Heart right ventricle (tissue), 16 donors: ENCODE measurements at regions of chr15 and their contacts with region 1.

Region 1: GRCh38 chr15:35674873-35675781 is 129.2 kb upstream of the DPH6 start:
- DNase-seq: peak in 1 of 2 donors; percentile 29
- ATAC-seq: peak in 4 of 8 donors; percentile 18 to 43 (median 30)
- H3K4me3 ChIP-seq: no peak overlapping the region
- H3K27ac ChIP-seq: peak overlapping the region; percentile 8 to 82 (median 49)
- H3K4me1 ChIP-seq: peaks cover 0 to 59% (median 41%) of the 10 kb centered on the region in 9 donors
- H3K27me3 ChIP-seq: no peaks in the 10 kb centered on the region
- CTCF ChIP-seq: no peak

Region 2: GRCh38 chr15:35535365-35535916 is 139.7 kb before region 1 on chr15:
- intact Hi-C with region 1: loop called in 2 of 10 experiments (anchors 5 to 10 kb)
- DNase-seq: no peak
- ATAC-seq: no peak
- H3K4me3 ChIP-seq: no peak overlapping the region
- H3K27ac ChIP-seq: no peak overlapping the region
- H3K4me1 ChIP-seq: no peaks in the 10 kb centered on the region
- H3K27me3 ChIP-seq: no peaks in the 10 kb centered on the region
- CTCF ChIP-seq: no peak

Region 3: DNA sequence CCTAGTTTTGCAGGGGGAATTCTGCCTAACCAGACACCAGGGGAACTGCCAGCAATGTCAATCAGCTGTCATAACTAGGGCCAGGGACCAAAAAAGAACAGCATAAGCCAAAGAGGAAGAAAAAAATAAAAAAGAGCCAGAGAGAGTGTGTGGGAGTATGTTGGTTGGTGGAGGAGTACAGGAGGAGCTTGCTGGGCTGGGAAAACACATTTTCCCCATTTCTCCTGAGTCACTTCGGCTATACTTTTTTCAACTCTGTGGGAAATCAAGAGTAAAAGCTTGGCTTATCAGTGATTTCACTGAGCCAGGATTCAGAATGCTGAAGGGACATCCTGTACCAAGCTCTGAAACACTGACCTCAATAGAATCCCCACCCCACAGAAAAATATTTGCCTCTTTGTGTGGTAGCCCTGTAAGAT is 15.6 kb after region 1 on chr15:
- intact Hi-C with region 1: loop called in 1 of 10 experiments (anchors 2 kb)
- DNase-seq: no peak
- ATAC-seq: peak; percentile 75 to 96 (median 94)
- H3K4me3 ChIP-seq: peak overlapping the region in 1 of 10 donors; percentile 10
- H3K27ac ChIP-seq: peak overlapping the region; percentile 59 to 91 (median 82)
- H3K4me1 ChIP-seq: peaks cover 8 to 67% (median 44%) of the 10 kb centered on the region in 9 donors
- H3K27me3 ChIP-seq: no peaks in the 10 kb centered on the region
- CTCF ChIP-seq: no peak

Region 4: DNA sequence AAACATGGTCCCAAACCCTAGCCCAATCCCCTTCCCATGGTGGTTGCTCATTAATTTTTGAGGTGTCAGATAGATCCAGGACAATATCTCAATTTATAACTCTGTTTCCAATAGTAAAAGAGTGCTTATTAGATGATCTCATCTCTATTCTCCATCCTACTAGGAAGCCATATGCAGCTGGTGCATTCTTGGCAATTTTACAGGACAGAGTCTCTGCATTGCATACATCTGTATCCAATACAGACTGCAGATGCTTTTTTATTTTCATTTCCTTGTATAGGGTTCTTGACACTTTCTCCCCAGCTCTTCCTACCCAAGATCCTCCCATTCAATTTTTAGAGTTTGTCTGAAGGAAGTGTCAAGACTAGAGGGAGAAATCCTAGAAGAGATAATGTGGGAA is 65.6 kb after region 1 on chr15:
- intact Hi-C with region 1: no loop called
- DNase-seq: no peak
- ATAC-seq: no peak
- H3K4me3 ChIP-seq: no peak overlapping the region
- H3K27ac ChIP-seq: no peak overlapping the region
- H3K4me1 ChIP-seq: no peaks in the 10 kb centered on the region
- H3K27me3 ChIP-seq: no peaks in the 10 kb centered on the region
- CTCF ChIP-seq: no peak

Region 5: DNA sequence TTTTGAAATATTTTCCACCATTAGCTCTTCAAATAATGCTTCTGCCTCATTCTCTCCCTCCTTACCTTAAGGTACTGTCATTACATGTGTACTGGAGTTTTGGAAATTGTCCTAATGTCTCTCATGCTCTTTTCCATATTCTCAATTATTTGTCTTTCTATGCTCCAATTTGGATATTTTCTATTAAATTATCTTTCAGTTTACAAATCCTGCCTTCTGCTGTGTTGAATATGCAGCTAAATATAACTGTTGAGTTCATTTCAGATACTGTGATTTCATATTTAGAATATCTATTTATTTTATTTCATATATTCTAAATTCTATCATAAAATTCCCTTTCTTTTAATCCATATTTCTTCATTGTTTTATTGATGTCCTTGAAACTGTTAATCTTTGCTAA is 516.3 kb after region 1 on chr15:
- intact Hi-C with region 1: no loop called
- DNase-seq: no peak
- ATAC-seq: no peak
- H3K4me3 ChIP-seq: no peak overlapping the region
- H3K27ac ChIP-seq: no peak overlapping the region
- H3K4me1 ChIP-seq: no peaks in the 10 kb centered on the region
- H3K27me3 ChIP-seq: no peaks in the 10 kb centered on the region
- CTCF ChIP-seq: no peak